CD8-positive, alpha-beta T cell (primary cell): ENCODE measurements at regions of chr7 and their contacts with region 1.

Region 1: DNA sequence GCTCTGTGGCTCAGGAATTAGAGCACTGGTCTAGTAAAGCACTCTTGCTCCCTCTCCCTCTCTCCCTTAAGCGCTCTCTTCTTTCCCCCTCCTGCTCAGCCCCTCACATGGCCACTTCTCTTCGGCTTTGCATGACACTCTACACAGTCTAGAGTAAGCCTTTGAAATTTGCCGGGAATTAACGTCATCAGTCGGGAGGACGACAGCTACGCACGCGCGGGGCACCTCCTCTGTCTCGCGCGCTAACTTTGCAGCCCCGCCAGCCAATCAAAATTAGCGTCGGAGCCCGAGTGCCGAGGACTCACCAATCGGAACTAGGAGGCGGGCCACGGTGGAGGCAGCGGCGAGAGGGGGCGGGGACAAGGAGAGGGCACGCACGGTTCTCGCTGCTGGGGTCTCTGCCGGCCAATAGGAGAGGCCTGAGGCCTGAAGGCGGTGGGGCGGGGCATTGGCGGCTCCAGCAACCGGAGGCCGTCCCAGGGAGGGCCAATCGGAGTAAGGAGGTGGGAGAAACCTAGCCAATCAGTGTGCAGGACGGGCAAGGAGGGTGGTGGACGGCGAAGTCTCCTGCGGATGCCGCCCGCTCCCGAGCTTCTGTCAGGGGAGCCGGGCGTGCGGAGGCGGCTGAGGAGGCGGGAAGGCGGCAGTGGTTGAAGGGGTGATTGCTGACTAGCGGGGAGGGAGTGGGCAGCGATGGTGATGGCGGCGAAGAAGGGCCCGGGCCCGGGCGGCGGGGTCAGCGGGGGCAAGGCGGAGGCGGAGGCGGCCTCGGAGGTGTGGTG is at the start of gene AGFG2:
- DNase-seq: peak; percentile 100
- ATAC-seq: peak; percentile 94
- H3K4me3 ChIP-seq: peak within 1 kb of the TSS; percentile 67 to 74
- H3K4me3 Mint-ChIP-seq: peak within 1 kb of the TSS; percentile 99
- H3K27ac ChIP-seq: peak within 1 kb of the TSS; percentile 48 to 61
- H3K27ac Mint-ChIP-seq: peak within 1 kb of the TSS; percentile 84
- H3K4me1 ChIP-seq: peaks cover 40% of the 10 kb centered on the region
- H3K4me1 Mint-ChIP-seq: peaks cover 49% of the 10 kb centered on the region
- H3K27me3 ChIP-seq: no peaks in the 10 kb centered on the region
- H3K27me3 Mint-ChIP-seq: no peaks in the 10 kb centered on the region
- CTCF ChIP-seq: no peak
- total RNA-seq, gene AGFG2: 4.4 to 6.3 TPM

Region 2: DNA sequence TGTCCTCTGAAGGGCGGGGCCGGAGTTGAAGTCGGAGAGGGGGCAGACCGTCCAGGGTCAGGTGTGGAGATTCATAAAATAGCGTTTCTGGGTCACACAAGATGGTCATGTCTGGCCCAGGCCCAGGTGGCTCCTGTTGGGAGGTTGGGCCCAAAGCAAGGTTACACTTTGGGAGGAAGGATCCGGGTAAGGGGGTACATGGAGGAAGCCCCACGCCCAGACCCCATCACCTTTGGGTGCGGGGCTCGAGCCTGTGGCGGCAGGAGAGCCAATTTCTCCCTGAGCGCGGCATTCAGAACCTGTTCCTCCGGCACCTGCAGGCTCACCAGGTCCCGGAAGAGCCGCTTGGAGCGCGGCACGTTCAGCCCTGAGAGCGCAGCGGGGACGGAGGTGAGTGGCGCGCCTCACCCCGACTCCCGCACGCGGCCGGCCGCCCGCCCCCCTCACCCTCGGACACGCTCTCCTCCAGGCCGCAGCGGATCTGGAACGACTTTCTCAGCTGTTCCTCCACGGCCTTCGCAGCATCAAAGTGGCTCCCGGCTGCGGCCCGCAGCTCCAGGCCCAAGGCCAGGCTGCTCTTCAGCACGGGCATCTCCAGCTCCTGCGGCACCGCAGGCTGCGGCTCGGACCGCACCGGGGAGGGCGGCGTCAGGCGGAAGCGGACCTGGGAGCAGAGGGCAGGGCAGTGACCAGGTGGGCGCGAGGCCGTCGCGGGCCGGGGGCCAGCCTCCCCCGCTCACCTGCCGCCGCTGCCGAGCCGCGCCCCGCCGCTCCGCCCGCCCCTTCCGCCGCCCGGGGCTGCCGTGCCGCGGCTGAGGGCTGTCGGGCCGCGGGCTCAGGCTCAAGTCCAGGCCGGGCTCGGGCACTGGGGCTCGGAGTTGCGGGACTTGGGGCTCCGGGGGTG is 103.2 kb before region 1 on chr7:
- CTCF ChIA-PET with region 1: no interaction called
- POLR2A ChIA-PET with region 1: no interaction called
- intact Hi-C with region 1: loop called (anchors 1 to 2 kb)
- DNase-seq: peak in 8 of 9 experiments; percentile 35 to 76 (median 52)
- ATAC-seq: peak; percentile 32
- H3K4me3 ChIP-seq: peak overlapping the region; percentile 75 to 90
- H3K4me3 Mint-ChIP-seq: peak overlapping the region; percentile 94
- H3K27ac ChIP-seq: peak overlapping the region; percentile 90 to 96
- H3K27ac Mint-ChIP-seq: peak overlapping the region; percentile 97
- H3K4me1 ChIP-seq: peaks cover 38% of the 10 kb centered on the region
- H3K4me1 Mint-ChIP-seq: peaks cover 51% of the 10 kb centered on the region
- H3K27me3 ChIP-seq: no peaks in the 10 kb centered on the region
- H3K27me3 Mint-ChIP-seq: no peaks in the 10 kb centered on the region
- CTCF ChIP-seq: no peak

Region 3: GRCh38 chr7:100489824-100490223 is 49.0 kb before region 1 on chr7:
- CTCF ChIA-PET with region 1: no interaction called
- POLR2A ChIA-PET with region 1: no interaction called
- intact Hi-C with region 1: no loop called
- DNase-seq: peak in 4 of 9 experiments; percentile 24 to 66 (median 49)
- ATAC-seq: no peak
- H3K4me3 ChIP-seq: no peak overlapping the region
- H3K4me3 Mint-ChIP-seq: no peak overlapping the region
- H3K27ac ChIP-seq: no peak overlapping the region
- H3K27ac Mint-ChIP-seq: no peak overlapping the region
- H3K4me1 ChIP-seq: peaks cover 12% of the 10 kb centered on the region
- H3K4me1 Mint-ChIP-seq: peaks cover 15% of the 10 kb centered on the region
- H3K27me3 ChIP-seq: no peaks in the 10 kb centered on the region
- H3K27me3 Mint-ChIP-seq: no peaks in the 10 kb centered on the region
- CTCF ChIP-seq: no peak

Region 4: DNA sequence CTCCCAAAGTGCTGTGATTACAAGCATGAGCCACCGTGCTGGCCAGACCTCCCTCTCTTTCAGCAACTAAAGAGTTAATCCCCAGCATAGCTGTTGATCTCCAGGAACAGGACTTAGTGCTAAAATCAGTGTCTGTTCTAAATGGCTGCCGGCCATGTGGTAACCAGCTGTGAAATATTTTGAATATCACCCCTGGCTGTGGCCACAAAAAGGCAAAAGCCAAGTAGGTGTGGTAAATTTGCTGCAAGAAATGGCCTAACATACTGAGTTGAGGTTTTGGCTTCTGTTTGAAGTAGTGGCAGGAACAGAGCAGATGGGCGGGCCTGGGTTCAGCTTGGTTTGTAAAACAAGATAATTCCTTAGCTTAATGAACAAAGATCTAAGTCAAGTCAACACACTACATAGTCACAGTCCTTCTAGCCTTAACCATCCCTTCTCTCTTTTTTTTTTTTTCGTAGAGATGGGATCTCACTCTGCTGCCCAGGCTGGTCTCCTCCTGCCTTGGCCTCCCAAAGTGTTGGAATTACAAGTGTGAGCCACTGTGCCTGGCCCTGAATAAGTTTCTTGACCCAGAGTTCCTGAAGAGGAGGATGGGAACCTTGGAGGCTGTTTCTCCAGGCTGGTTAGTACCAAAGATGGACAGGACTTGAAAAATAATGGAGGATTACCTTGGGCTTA is 22.6 kb before region 1 on chr7:
- CTCF ChIA-PET with region 1: interaction called, 3 read pairs
- POLR2A ChIA-PET with region 1: interaction called, 4 read pairs
- intact Hi-C with region 1: loop called in 1 of 2 experiments (anchors 1 kb)
- DNase-seq: peak; percentile 36 to 87 (median 61)
- ATAC-seq: peak; percentile 92
- H3K4me3 ChIP-seq: peak overlapping the region in 1 of 2 experiments; percentile 5
- H3K4me3 Mint-ChIP-seq: peak overlapping the region; percentile 73
- H3K27ac ChIP-seq: peak overlapping the region in 1 of 2 experiments; percentile 9
- H3K27ac Mint-ChIP-seq: peak overlapping the region; percentile 83
- H3K4me1 ChIP-seq: peaks cover 30% of the 10 kb centered on the region
- H3K4me1 Mint-ChIP-seq: peaks cover 42% of the 10 kb centered on the region
- H3K27me3 ChIP-seq: peaks cover 0 to 3% of the 10 kb centered on the region in 2 experiments
- H3K27me3 Mint-ChIP-seq: no peaks in the 10 kb centered on the region
- CTCF ChIP-seq: no peak

Region 5: GRCh38 chr7:100611974-100612729 is 73.3 kb after region 1 on chr7 and contains the start of gene MOSPD3:
- CTCF ChIA-PET with region 1: no interaction called
- POLR2A ChIA-PET with region 1: interaction called, 3 read pairs
- intact Hi-C with region 1: loop called (anchors 1 to 2 kb)
- DNase-seq: peak; percentile 96 to 100 (median 98)
- ATAC-seq: peak; percentile 89
- H3K4me3 ChIP-seq: peak within 1 kb of the TSS; percentile 68 to 96
- H3K4me3 Mint-ChIP-seq: peak within 1 kb of the TSS; percentile 99
- H3K27ac ChIP-seq: peak within 1 kb of the TSS; percentile 93 to 98
- H3K27ac Mint-ChIP-seq: peak within 1 kb of the TSS; percentile 100
- H3K4me1 ChIP-seq: peaks cover 19% of the 10 kb centered on the region
- H3K4me1 Mint-ChIP-seq: peaks cover 24% of the 10 kb centered on the region
- H3K27me3 ChIP-seq: no peaks in the 10 kb centered on the region
- H3K27me3 Mint-ChIP-seq: no peaks in the 10 kb centered on the region
- CTCF ChIP-seq: no peak
- total RNA-seq, gene MOSPD3: 10.3 to 10.5 TPM

Region 6: DNA sequence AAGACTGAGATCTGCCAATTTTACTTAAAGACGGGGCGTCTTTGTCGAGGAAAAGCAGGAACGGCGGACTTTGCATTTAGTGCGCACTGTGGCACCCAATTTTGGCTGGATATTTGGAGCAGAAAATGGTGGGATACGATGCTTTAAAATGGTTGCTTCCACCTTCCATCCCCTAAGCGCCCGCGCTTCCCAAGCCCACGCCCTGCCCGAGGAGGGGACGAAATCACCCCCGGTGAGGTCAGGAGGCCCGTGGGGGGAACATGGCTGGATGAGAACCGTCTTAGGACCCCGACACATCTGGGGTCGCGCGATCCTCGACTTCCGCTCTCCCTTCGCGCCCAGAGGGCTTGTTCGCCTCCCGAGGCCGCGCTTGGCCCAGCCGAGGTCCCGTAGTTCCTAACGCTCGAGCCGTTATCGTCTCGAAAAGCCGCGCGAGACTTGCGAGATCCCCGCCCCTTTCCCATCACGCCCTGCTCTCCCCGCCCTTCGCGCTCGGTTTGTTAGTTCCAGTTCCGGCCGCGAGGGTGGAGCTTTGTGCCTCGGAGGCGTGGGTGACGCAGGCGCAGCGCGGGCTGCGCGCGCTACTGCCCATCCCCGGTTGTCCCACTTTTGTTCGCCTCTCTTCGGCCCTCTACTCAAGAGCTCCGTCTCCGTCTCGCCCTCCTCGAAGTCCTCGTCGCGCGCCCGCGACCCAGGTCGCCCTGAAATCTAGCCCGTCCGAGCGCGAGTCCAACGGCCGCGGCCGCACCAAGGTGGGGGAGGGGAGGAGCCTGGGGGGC is 335.9 kb after region 1 on chr7 and contains the start of gene SRRT:
- CTCF ChIA-PET with region 1: no interaction called
- POLR2A ChIA-PET with region 1: no interaction called
- intact Hi-C with region 1: loop called in 1 of 2 experiments (anchors 1 kb)
- DNase-seq: peak; percentile 97 to 99 (median 98)
- ATAC-seq: peak; percentile 97
- H3K4me3 ChIP-seq: peak within 1 kb of the TSS; percentile 75 to 94
- H3K4me3 Mint-ChIP-seq: peak within 1 kb of the TSS; percentile 98
- H3K27ac ChIP-seq: peak within 1 kb of the TSS; percentile 93 to 96
- H3K27ac Mint-ChIP-seq: peak within 1 kb of the TSS; percentile 99
- H3K4me1 ChIP-seq: peaks cover 41% of the 10 kb centered on the region
- H3K4me1 Mint-ChIP-seq: peaks cover 43% of the 10 kb centered on the region
- H3K27me3 ChIP-seq: no peaks in the 10 kb centered on the region
- H3K27me3 Mint-ChIP-seq: no peaks in the 10 kb centered on the region
- CTCF ChIP-seq: no peak
- total RNA-seq, gene SRRT: 491 to 496 TPM

Region 7: GRCh38 chr7:101814991-101815834 is 1276.4 kb after region 1 on chr7:
- CTCF ChIA-PET with region 1: no interaction called
- POLR2A ChIA-PET with region 1: no interaction called
- intact Hi-C with region 1: no loop called
- DNase-seq: peak; percentile 43 to 83 (median 69)
- ATAC-seq: peak; percentile 55
- H3K4me3 ChIP-seq: peak overlapping the region; percentile 52 to 80
- H3K4me3 Mint-ChIP-seq: peak overlapping the region; percentile 84
- H3K27ac ChIP-seq: no peak overlapping the region
- H3K27ac Mint-ChIP-seq: peak overlapping the region; percentile 63
- H3K4me1 ChIP-seq: peaks cover 16% of the 10 kb centered on the region
- H3K4me1 Mint-ChIP-seq: peaks cover 31% of the 10 kb centered on the region
- H3K27me3 ChIP-seq: no peaks in the 10 kb centered on the region
- H3K27me3 Mint-ChIP-seq: no peaks in the 10 kb centered on the region
- CTCF ChIP-seq: peak; percentile 26